ENCODE measurements at regions of chr9 and their contacts with region 1.

Region 1: DNA sequence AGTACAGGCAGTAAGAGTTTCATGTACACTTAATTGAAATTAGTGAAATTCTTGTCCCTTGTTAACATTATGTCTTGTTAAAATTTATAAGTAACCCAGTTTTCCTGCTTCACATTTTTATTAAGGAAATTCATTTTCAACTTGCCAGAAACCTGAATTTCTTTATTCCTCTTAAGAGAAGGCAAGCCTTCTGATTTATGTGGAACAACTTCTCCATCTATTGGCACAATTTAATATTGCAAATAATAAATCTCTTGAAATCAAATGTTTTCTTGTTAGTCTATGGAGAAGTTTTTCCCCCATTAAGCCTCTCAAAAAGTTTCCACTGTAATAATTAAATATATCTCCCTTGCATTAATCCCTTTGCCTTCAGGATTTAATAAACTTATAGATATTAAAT is 33.8 kb upstream of the ACO1 start:
- H3K4me3 Mint-ChIP-seq: no peak overlapping the region
- H3K27ac Mint-ChIP-seq: no peak overlapping the region
- H3K4me1 Mint-ChIP-seq: no peaks in the 10 kb centered on the region
- H3K27me3 Mint-ChIP-seq: no peaks in the 10 kb centered on the region

Region 2: DNA sequence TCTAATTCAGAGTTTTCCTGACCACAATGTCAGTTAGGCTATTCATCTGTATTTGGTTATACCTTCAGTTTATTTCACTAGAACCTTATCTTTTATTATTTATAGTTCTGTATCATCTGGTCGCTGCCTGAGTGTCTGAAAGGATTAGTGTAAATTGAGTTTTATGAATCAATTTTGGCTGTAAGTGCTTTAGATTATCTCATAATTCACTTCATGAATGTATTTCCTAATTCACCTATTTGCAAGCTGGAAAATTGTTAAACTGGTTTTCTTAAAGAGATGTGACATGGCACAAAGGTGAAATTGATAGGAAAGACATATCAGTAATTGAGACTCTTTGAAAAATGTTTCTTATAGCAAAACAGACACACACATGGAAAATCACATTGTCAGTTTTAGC is 208.6 kb before region 1 on chr9:
- intact Hi-C with region 1: loop called (anchors 5 kb)
- H3K4me3 Mint-ChIP-seq: no peak overlapping the region
- H3K27ac Mint-ChIP-seq: no peak overlapping the region
- H3K4me1 Mint-ChIP-seq: no peaks in the 10 kb centered on the region
- H3K27me3 Mint-ChIP-seq: peaks cover 2% of the 10 kb centered on the region

Region 3: GRCh38 chr9:32294106-32294505 is 56.6 kb before region 1 on chr9:
- intact Hi-C with region 1: no loop called
- H3K4me3 Mint-ChIP-seq: no peak overlapping the region
- H3K27ac Mint-ChIP-seq: no peak overlapping the region
- H3K4me1 Mint-ChIP-seq: no peaks in the 10 kb centered on the region
- H3K27me3 Mint-ChIP-seq: no peaks in the 10 kb centered on the region

Region 4: GRCh38 chr9:32558408-32558934 is 207.8 kb after region 1 on chr9:
- intact Hi-C with region 1: no loop called
- H3K4me3 Mint-ChIP-seq: peak overlapping the region; percentile 18
- H3K27ac Mint-ChIP-seq: peak overlapping the region; percentile 13
- H3K4me1 Mint-ChIP-seq: peaks cover 28% of the 10 kb centered on the region
- H3K27me3 Mint-ChIP-seq: no peaks in the 10 kb centered on the region